ENCODE measurements at regions of chr1 and their contacts with region 1.

Region 1: DNA sequence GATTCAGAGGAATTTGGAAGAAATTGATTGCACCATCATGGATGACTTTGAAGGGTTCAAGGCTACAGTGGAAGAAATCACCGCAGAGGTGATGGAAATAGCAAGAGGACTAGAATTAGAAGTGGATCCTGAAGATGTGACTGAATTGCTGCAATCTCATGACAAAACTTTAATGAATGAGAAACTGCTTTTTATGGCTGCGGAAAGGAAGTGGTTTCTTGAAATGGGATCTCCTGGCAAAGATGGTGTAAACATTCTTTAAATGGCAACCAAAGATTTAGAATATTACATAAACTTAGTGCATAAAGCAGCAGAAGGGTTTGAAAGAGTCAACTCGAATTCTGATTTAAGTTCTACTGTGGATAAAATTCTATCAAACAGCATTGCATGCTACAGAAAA is 698.6 kb downstream of the PLA2G4A start:
- DNase-seq: no peak

Region 2: DNA sequence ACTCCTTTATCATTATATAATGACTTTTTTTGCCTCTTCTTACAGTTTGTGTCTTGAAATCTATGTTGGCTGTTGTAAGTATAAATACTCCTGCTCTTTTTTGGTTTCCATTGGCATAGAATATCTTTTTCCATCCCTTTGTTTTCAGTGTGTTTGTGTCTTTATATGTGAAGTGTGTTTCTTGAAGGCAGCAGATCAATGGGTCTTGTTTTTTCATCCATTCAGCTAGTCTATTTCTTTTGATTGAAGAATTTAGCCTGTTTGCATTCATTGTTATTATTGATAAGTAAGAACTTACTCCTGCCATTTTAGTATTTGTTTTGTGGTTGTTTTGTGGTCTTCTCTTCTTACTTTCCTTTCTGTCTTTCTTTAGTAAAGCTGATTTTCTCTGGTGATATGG is 375.8 kb before region 1 on chr1:
- intact Hi-C with region 1: no loop called
- DNase-seq: no peak

Region 3: DNA sequence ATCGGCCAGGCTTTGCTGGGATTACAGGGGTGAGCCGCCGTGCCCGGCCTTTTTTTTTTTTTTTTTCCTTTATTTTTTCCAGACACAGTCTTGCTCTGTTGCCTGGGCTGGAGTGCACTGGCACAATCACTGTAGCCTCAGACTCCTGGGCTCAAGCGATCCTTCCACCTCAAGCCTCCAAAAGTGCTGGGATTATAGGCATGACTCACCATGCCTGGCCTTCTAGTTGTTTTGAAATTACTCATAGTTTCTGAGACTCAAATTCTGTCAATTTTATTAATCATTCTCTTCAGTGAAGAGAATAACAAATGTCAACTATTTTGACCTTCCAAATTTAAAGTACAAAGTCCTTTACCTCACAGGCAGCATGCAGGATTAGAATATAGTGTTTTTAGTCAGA is 324.1 kb before region 1 on chr1:
- intact Hi-C with region 1: no loop called
- DNase-seq: no peak

Region 4: GRCh38 chr1:187551061-187551460 is 23.7 kb after region 1 on chr1:
- intact Hi-C with region 1: loop called in 1 of 2 experiments (anchors 2 kb)
- DNase-seq: no peak

Measured in posterior vena cava (tissue), 2 donors.